ENCODE measurements at regions of chr7 and their contacts with region 1.

Region 1: GRCh38 chr7:71237945-71238344 is 106.0 kb downstream of the GALNT17 start:
- DNase-seq: peak in 4 of 5 donors; percentile 32 to 74 (median 46)
- ATAC-seq: peak; percentile 85 to 90 (median 88)
- H3K4me3 ChIP-seq: no peak overlapping the region
- H3K27ac ChIP-seq: peak overlapping the region in 11 of 12 donors; percentile 50 to 96 (median 84)
- H3K4me1 ChIP-seq: peaks cover 0 to 40% (median 17%) of the 10 kb centered on the region in 12 donors
- H3K27me3 ChIP-seq: no peaks in the 10 kb centered on the region
- CTCF ChIP-seq: peak in 10 of 12 donors; percentile 9 to 59 (median 30)
- POLR2A ChIP-seq: no peak

Region 2: DNA sequence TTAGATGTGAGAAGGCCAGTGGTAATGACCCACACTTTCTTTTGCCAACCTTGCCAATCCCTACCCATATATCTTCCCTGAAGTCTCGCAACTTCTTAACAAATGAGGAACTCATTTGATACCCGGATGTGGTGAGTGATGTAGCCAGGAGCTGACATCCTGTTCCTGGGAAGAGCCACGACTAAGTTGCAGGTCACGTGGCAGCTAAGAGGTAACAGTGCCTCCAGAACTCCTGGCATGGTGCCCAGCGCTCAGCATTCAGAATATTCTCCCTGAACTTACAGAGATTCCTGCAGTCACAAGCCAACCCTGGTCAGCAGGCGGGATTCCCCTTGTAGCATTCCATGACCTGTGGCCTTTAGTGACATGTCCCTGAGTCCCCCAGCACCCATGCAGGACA is 176.5 kb after region 1 on chr7:
- intact Hi-C with region 1: loop called in 5 of 10 experiments (anchors 5 to 10 kb)
- DNase-seq: peak; percentile 66 to 88 (median 77)
- ATAC-seq: peak; percentile 53 to 84 (median 76)
- H3K4me3 ChIP-seq: no peak overlapping the region
- H3K27ac ChIP-seq: peak overlapping the region in 4 of 12 donors; percentile 12 to 63 (median 23)
- H3K4me1 ChIP-seq: peaks cover 0 to 11% (median 3%) of the 10 kb centered on the region in 12 donors
- H3K27me3 ChIP-seq: no peaks in the 10 kb centered on the region
- CTCF ChIP-seq: no peak
- POLR2A ChIP-seq: no peak

Region 3: GRCh38 chr7:71626206-71626605 is 388.3 kb after region 1 on chr7:
- intact Hi-C with region 1: loop called in 1 of 10 experiments (anchors 10 kb)
- DNase-seq: no peak
- ATAC-seq: no peak
- H3K4me3 ChIP-seq: no peak overlapping the region
- H3K27ac ChIP-seq: no peak overlapping the region
- H3K4me1 ChIP-seq: peaks cover 0 to 18% (median 4%) of the 10 kb centered on the region in 12 donors
- H3K27me3 ChIP-seq: no peaks in the 10 kb centered on the region
- CTCF ChIP-seq: no peak
- POLR2A ChIP-seq: no peak

Measured in heart left ventricle (tissue), 16 donors.